Activated B cell treated with CpG ODN at 0.5 μM for 24 hours (primary cell): ENCODE measurements at regions of chr1 and their contacts with region 1.

Region 1: DNA sequence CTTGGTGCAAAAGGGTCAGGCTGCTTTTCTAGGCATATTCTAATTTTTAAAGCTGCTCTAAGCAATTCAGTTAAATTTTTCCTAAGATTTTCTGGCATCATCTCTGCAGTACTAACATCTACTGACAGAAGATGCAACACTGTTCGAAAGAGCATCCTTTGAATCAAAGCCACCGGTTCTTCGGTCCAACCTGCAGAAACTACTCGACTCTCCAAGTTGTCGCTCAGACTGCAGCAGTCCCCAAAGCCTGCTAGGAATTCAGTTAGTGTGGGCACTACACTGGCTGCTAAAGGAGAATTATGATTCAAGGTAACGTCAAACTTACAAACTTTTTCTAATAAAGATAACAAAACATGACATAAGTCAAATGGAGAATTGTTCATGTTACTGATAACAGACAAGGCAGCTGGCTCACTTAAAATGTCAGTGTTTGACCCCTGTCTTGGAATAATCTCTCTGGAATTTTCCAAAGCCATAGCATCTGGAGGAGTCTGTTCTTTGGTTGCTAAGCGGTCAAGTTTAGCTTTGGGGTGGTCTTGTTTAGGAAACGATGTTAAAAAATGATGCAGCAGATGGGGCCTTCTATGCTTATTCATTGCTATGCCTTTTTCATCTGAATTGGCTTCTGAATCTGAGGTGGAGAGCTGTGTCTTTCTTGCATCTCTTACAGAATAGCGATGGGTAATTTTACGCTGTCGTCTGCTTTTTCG is 56.9 kb downstream of the LYST start:
- DNase-seq: no peak
- ATAC-seq: no peak
- H3K4me3 Mint-ChIP-seq: no peak overlapping the region
- H3K27ac Mint-ChIP-seq: no peak overlapping the region
- H3K4me1 Mint-ChIP-seq: no peaks in the 10 kb centered on the region
- H3K27me3 Mint-ChIP-seq: no peaks in the 10 kb centered on the region
- CTCF ChIP-seq: no peak

Region 2: DNA sequence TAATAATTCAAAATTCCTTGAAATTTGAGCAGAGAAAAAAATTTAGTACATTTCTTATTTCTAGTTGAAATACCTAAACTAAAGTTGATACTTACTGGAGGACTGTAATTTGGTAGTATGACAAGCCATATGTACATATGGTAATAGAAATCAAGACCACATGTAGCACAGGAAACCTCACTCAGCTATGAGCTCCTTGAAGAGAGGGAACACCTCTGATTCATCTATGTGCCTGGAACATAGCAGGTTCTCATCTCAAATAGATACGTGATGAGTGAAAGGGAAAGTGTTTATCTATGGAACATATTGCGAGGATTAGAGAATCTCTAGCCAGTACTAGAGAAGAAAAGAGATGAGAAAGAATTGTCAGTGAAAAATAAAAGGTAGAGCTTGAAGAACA is 112.3 kb before region 1 on chr1:
- CTCF ChIA-PET with region 1: no interaction called
- POLR2A ChIA-PET with region 1: no interaction called
- intact Hi-C with region 1: no loop called
- DNase-seq: no peak
- ATAC-seq: no peak
- H3K4me3 Mint-ChIP-seq: no peak overlapping the region
- H3K27ac Mint-ChIP-seq: no peak overlapping the region
- H3K4me1 Mint-ChIP-seq: no peaks in the 10 kb centered on the region
- H3K27me3 Mint-ChIP-seq: no peaks in the 10 kb centered on the region
- CTCF ChIP-seq: no peak

Region 3: GRCh38 chr1:235791532-235792060 is 18.2 kb before region 1 on chr1:
- CTCF ChIA-PET with region 1: no interaction called
- POLR2A ChIA-PET with region 1: no interaction called
- intact Hi-C with region 1: loop called (anchors 2 kb)
- DNase-seq: no peak
- ATAC-seq: no peak
- H3K4me3 Mint-ChIP-seq: no peak overlapping the region
- H3K27ac Mint-ChIP-seq: peak overlapping the region; percentile 56
- H3K4me1 Mint-ChIP-seq: peaks cover 13% of the 10 kb centered on the region
- H3K27me3 Mint-ChIP-seq: no peaks in the 10 kb centered on the region
- CTCF ChIP-seq: no peak

Region 4: GRCh38 chr1:235835226-235835625 is 25.4 kb after region 1 on chr1:
- CTCF ChIA-PET with region 1: no interaction called
- POLR2A ChIA-PET with region 1: no interaction called
- intact Hi-C with region 1: no loop called
- DNase-seq: no peak
- ATAC-seq: no peak
- H3K4me3 Mint-ChIP-seq: no peak overlapping the region
- H3K27ac Mint-ChIP-seq: no peak overlapping the region
- H3K4me1 Mint-ChIP-seq: peaks cover 26% of the 10 kb centered on the region
- H3K27me3 Mint-ChIP-seq: no peaks in the 10 kb centered on the region
- CTCF ChIP-seq: no peak

Region 5: GRCh38 chr1:235865565-235866204 is 55.8 kb after region 1 on chr1:
- CTCF ChIA-PET with region 1: no interaction called
- POLR2A ChIA-PET with region 1: no interaction called
- intact Hi-C with region 1: no loop called
- DNase-seq: no peak
- ATAC-seq: no peak
- H3K4me3 Mint-ChIP-seq: peak overlapping the region; percentile 98
- H3K27ac Mint-ChIP-seq: peak overlapping the region; percentile 99
- H3K4me1 Mint-ChIP-seq: peaks cover 71% of the 10 kb centered on the region
- H3K27me3 Mint-ChIP-seq: no peaks in the 10 kb centered on the region
- CTCF ChIP-seq: no peak